ENCODE measurements at regions of chr21 and their contacts with region 1.

Region 1: GRCh38 chr21:39379986-39380891 is 31.4 kb upstream of the HMGN1 start:
- DNase-seq: peak; percentile 95
- H3K4me3 ChIP-seq: peak overlapping the region; percentile 62 to 78 (median 68)
- H3K27ac ChIP-seq: peak overlapping the region; percentile 84
- H3K4me1 ChIP-seq: peaks cover 16% of the 10 kb centered on the region
- H3K27me3 ChIP-seq: no peaks in the 10 kb centered on the region
- CTCF ChIP-seq: no peak

Region 2: DNA sequence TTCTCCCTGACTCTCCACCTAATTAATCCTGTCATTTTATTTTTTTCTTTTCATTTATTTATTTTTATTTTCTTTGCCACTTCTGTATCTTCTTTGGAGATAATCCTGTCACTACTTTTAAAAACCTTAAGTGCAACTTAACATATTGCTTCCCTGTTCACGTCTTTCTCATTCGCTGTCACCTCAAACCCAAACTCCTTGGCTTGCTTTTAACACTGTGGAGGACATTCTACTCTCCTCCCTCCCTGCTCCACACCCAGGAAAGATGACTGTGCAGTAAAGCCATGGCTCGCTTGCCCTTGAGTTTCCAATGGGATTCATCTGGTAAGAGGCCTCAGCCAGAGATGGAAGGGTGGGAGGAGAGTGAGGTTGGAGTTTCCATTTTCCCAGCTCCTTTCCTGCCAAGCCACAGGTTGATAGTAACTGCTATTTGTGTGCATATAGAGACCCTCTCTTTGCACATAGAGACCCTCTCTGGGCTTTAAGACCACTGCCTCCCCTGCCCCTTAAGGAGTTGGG is 60.4 kb before region 1 on chr21:
- CTCF ChIA-PET with region 1: no interaction called
- dilution Hi-C with region 1: no loop called
- in situ Hi-C with region 1: loop called in 1 of 2 experiments (anchors 10 kb)
- intact Hi-C with region 1: loop called (anchors 2 kb)
- DNase-seq: no peak
- H3K4me3 ChIP-seq: no peak overlapping the region
- H3K27ac ChIP-seq: no peak overlapping the region
- H3K4me1 ChIP-seq: peaks cover 37% of the 10 kb centered on the region
- H3K27me3 ChIP-seq: no peaks in the 10 kb centered on the region
- CTCF ChIP-seq: no peak

Measured in mammary epithelial cell (primary cell).